MCF 10A (cell line): ENCODE measurements at regions of chr7 and their contacts with region 1.

Region 1: GRCh38 chr7:106346678-106347217 is 62.0 kb upstream of the NAMPT start:
- DNase-seq: peak; percentile 94
- H3K4me3 Mint-ChIP-seq: peak overlapping the region; percentile 6
- H3K27ac Mint-ChIP-seq: peak overlapping the region; percentile 75
- H3K4me1 Mint-ChIP-seq: peaks cover 19% of the 10 kb centered on the region
- H3K27me3 Mint-ChIP-seq: no peaks in the 10 kb centered on the region
- CTCF ChIP-seq: no peak

Region 2: GRCh38 chr7:106329971-106330733 is 16.6 kb before region 1 on chr7:
- CTCF ChIA-PET with region 1: no interaction called
- POLR2A ChIA-PET with region 1: interaction called, 11 read pairs
- intact Hi-C with region 1: no loop called
- DNase-seq: peak; percentile 51
- H3K4me3 Mint-ChIP-seq: no peak overlapping the region
- H3K27ac Mint-ChIP-seq: peak overlapping the region; percentile 83
- H3K4me1 Mint-ChIP-seq: peaks cover 13% of the 10 kb centered on the region
- H3K27me3 Mint-ChIP-seq: no peaks in the 10 kb centered on the region
- CTCF ChIP-seq: no peak

Region 3: DNA sequence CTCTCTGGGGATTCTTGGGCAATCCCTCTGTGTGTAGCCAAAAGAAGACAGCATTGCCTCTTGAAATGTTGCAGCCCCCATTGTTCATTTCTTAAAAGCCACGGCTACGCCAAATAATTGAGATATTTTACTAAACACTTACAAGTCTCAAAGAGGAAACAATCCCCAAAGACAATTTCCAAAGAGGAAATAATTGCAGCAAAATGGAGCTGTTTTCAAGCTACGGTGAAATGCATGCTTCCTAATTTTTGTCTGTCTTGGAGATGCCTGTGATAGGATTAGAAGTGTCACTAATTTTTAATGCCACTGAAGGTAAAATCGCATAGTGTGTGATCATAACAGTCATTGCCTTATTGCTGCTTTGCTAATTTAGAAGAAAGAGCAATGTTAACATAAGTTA is 10.9 kb after region 1 on chr7:
- CTCF ChIA-PET with region 1: no interaction called
- POLR2A ChIA-PET with region 1: no interaction called
- intact Hi-C with region 1: no loop called
- DNase-seq: no peak
- H3K4me3 Mint-ChIP-seq: no peak overlapping the region
- H3K27ac Mint-ChIP-seq: no peak overlapping the region
- H3K4me1 Mint-ChIP-seq: no peaks in the 10 kb centered on the region
- H3K27me3 Mint-ChIP-seq: no peaks in the 10 kb centered on the region
- CTCF ChIP-seq: no peak

Region 4: DNA sequence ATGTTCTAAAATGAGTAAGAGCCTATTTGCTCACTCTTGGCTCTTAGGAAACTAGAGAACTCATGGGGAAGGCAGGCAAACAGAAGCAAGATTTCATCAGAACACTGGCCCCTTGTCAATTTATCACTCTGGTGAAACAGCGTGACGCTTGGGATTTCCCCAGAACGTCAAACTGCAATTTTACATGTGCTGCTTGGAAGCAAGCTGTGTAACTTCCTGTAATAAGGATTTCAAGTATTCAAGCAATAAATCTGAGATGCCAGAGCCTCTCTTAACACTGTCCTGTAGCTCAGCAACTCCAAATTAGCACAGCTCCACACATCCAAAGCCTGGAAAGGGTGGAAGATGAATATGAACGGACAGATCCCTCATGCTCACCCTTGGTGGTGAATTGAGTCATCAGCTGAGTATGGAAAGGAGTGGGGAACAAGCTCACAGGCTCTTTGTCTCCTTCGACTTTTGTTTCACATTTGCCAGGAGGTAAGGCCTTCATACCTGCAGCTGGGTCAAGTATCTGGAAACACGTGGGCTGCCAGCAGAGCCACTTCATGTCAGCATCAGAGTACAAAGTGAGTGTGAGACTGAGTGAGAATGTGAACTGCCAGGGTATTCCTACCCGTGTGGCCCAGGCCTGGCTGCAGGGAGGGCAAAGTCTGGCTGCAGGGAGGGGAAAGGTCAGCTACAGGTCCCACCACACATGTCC is 78.4 kb after region 1 on chr7:
- CTCF ChIA-PET with region 1: interaction called, 3 read pairs
- POLR2A ChIA-PET with region 1: interaction called, 4 read pairs
- intact Hi-C with region 1: loop called (anchors 1 kb)
- DNase-seq: peak; percentile 99
- H3K4me3 Mint-ChIP-seq: peak overlapping the region; percentile 68
- H3K27ac Mint-ChIP-seq: peak overlapping the region; percentile 91
- H3K4me1 Mint-ChIP-seq: peaks cover 53% of the 10 kb centered on the region
- H3K27me3 Mint-ChIP-seq: no peaks in the 10 kb centered on the region
- CTCF ChIP-seq: no peak